ENCODE measurements at regions of chr7 and their contacts with region 1.

Region 1: GRCh38 chr7:55280031-55280454 is 85.1 kb upstream of the LANCL2 start:
- DNase-seq: peak; percentile 45
- ATAC-seq: peak; percentile 94
- H3K4me3 ChIP-seq: no peak overlapping the region
- H3K27ac ChIP-seq: no peak overlapping the region
- H3K4me1 ChIP-seq: no peaks in the 10 kb centered on the region
- H3K27me3 ChIP-seq: peaks cover 6% of the 10 kb centered on the region
- CTCF ChIP-seq: peak; percentile 87

Region 2: GRCh38 chr7:55369427-55370400 is 89.7 kb after region 1 on chr7:
- CTCF ChIA-PET with region 1: no interaction called
- POLR2A ChIA-PET with region 1: no interaction called
- in situ Hi-C with region 1: no loop called
- intact Hi-C with region 1: no loop called
- DNase-seq: no peak
- ATAC-seq: no peak
- H3K4me3 ChIP-seq: no peak overlapping the region
- H3K27ac ChIP-seq: no peak overlapping the region
- H3K4me1 ChIP-seq: peaks cover 7% of the 10 kb centered on the region
- H3K27me3 ChIP-seq: no peaks in the 10 kb centered on the region
- CTCF ChIP-seq: no peak

Region 3: DNA sequence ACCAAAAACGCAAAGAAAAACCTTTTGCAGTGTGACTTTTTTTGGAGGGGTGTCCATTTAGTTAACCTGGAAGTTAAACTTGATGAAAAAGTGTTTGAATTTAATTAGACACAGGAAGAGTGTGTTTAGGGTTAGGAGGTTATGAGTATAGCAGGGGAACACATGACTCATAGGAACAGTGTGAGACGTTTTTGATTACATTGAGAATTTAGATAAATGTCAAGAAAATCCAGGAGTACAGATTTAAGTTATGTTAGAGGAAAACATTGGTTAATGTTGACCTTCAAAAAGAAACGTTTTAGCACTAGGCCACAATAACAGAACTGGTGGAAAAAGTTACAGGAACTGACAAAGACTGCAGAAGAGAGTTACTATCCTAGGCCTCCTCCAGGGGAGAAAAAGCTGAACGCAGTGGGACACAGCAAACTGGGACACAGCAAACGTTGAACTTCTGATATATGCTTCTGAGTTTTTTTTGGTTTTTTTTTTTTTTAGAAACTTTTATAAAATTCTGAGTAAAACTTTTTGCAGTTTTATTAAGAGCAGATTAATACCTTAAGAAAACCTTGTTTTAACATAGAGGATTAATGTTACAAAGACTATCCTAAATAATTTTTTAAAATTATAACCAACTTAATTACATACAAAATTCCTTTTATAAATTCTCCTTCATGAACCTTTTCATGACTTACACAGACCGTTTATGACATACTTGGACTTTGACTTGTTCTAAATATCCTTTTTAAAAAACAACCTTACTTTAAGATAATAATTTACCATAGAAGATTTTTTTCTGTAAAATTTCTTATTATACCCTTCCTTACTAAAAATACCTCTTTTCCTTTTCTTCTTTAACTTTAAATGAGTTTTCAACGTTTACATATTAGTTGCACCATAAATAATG is 107.3 kb after region 1 on chr7:
- CTCF ChIA-PET with region 1: no interaction called
- POLR2A ChIA-PET with region 1: no interaction called
- in situ Hi-C with region 1: no loop called
- intact Hi-C with region 1: no loop called
- DNase-seq: no peak
- ATAC-seq: no peak
- H3K4me3 ChIP-seq: no peak overlapping the region
- H3K27ac ChIP-seq: no peak overlapping the region
- H3K4me1 ChIP-seq: no peaks in the 10 kb centered on the region
- H3K27me3 ChIP-seq: no peaks in the 10 kb centered on the region
- CTCF ChIP-seq: no peak

Region 4: GRCh38 chr7:55415173-55415778 is 135.2 kb after region 1 on chr7:
- CTCF ChIA-PET with region 1: interaction called, 16 read pairs
- POLR2A ChIA-PET with region 1: no interaction called
- in situ Hi-C with region 1: no loop called
- intact Hi-C with region 1: loop called (anchors 1 kb)
- DNase-seq: peak; percentile 65
- ATAC-seq: peak; percentile 95
- H3K4me3 ChIP-seq: no peak overlapping the region
- H3K27ac ChIP-seq: no peak overlapping the region
- H3K4me1 ChIP-seq: peaks cover 3% of the 10 kb centered on the region
- H3K27me3 ChIP-seq: no peaks in the 10 kb centered on the region
- CTCF ChIP-seq: peak; percentile 92

Region 5: DNA sequence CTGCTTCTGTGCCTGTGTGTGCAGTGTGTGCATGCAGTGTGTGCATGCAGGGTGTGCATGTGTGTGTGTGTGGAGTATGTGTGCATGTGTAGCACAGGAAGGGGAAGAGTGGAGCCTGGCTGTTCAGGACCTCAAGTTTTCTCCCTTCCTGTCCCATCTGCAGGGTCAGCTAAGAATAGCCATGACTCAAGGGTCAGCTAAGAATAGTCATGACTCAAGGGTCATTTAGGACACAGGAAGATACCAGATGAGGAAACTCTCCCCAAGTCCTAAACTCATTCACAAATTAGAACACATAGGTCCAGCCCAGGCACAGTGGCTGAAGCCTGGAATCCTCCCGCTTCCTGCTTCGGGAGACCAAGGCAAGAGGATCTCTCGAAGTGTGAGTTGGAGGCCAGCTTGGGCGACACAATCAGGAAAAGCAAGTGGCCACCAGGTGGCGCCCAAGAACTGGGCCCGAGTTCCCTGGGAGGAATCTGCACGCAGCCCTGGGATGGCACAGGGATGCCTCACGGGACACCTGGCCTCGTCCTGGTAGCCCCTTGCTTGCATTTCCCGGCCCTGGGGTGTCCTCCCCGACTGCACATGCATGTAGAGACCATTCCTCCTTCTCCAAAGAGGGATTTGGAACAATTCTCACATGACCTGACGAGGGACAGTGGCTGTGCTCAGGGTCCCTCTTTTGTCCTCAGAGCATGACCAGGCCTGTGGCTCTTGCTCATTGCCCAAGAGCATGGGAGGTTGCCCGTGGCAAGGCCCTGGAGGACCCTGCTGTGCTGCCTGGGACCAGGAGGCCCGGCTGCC is 313.7 kb after region 1 on chr7:
- CTCF ChIA-PET with region 1: no interaction called
- POLR2A ChIA-PET with region 1: no interaction called
- in situ Hi-C with region 1: no loop called
- intact Hi-C with region 1: loop called (anchors 10 kb)
- DNase-seq: peak; percentile 69
- ATAC-seq: peak; percentile 91
- H3K4me3 ChIP-seq: no peak overlapping the region
- H3K27ac ChIP-seq: no peak overlapping the region
- H3K4me1 ChIP-seq: no peaks in the 10 kb centered on the region
- H3K27me3 ChIP-seq: peaks cover 4% of the 10 kb centered on the region; the same call in 1 of the 2 replicates
- CTCF ChIP-seq: peak; percentile 99

Measured in Panc1 (cell line).